Endothelial cell of umbilical vein (primary cell): ENCODE measurements at regions of chr9 and their contacts with region 1.

Region 1: GRCh38 chr9:121686930-121687541 is 35.6 kb downstream of the DAB2IP start:
- DNase-seq: peak; percentile 78
- H3K4me3 ChIP-seq: no peak overlapping the region
- H3K27ac ChIP-seq: no peak overlapping the region
- H3K4me1 ChIP-seq: no peaks in the 10 kb centered on the region
- H3K27me3 ChIP-seq: no peaks in the 10 kb centered on the region
- CTCF ChIP-seq: peak; percentile 90 to 91
- POLR2A ChIP-seq: no peak

Region 2: GRCh38 chr9:121621113-121621449 is 66.0 kb before region 1 on chr9:
- CTCF ChIA-PET with region 1: interaction called, 23 read pairs
- POLR2A ChIA-PET with region 1: no interaction called
- dilution Hi-C with region 1: no loop called
- intact Hi-C with region 1: no loop called
- DNase-seq: peak; percentile 35
- H3K4me3 ChIP-seq: no peak overlapping the region
- H3K27ac ChIP-seq: no peak overlapping the region
- H3K4me1 ChIP-seq: no peaks in the 10 kb centered on the region
- H3K27me3 ChIP-seq: no peaks in the 10 kb centered on the region
- CTCF ChIP-seq: peak; percentile 38 to 61
- POLR2A ChIP-seq: no peak

Region 3: DNA sequence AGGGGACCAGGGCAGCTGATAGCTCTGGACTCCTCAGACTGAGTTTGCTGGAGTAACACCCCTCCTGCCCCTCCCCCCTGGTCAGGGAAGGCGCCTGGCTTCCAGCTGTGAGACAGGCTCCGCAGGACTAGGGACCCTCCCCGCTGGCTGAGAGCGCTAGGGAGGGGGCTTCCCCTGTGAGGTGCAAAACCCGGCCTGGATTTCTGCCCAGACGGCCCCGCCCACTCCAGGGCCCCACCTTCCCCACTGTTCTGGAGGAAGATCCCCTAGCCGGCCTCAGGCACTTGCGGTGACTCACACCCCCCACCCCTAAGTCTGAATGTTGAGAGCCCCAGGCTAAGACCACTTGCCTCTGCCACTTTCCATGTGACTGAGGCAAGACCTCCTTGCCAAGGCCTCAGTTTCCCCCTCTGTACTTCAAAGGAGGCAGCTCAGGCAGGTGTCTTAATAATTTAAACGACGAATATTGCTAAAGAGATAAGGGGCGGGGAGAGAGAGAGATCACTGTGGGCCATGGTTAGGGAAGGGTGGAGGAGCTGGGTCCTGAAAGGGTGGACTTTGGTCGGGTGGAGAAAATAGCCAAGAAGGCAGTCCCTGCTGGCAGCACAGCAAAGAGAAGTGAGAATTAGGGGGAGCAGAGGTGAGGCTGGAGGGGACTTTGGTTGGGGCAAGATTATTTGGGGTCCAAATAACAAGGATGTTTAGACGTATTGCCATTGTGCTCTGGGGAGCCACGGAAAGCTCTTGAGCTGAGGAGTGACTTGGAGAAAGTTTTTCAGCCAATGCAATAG is 36.6 kb before region 1 on chr9:
- CTCF ChIA-PET with region 1: interaction called, 24 read pairs
- POLR2A ChIA-PET with region 1: no interaction called
- dilution Hi-C with region 1: no loop called
- intact Hi-C with region 1: no loop called
- DNase-seq: peak; percentile 65
- H3K4me3 ChIP-seq: no peak overlapping the region
- H3K27ac ChIP-seq: no peak overlapping the region
- H3K4me1 ChIP-seq: peaks cover 25% of the 10 kb centered on the region
- H3K27me3 ChIP-seq: no peaks in the 10 kb centered on the region
- CTCF ChIP-seq: no peak
- POLR2A ChIP-seq: no peak

Region 4: DNA sequence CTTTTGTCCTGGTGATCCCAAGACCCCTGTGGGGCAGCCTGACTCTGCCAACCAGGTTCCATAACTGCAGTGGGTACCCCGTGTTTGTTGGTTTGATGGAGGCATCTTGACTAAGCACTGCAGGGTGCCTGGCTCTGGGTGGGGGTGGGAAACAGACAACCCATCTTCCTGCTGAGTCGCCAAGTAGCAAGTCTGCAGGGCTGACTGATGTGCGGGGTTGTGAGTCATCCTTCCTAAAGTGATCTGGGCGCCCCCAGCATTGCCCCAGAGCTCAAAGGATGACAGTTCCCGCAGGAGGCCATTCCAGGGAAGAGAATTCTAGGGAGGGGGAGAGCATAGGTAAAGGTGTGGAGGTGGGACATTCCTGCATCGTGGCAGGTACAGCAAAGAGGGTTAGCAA is 12.1 kb before region 1 on chr9:
- CTCF ChIA-PET with region 1: interaction called, 19 read pairs
- POLR2A ChIA-PET with region 1: no interaction called
- dilution Hi-C with region 1: no loop called
- intact Hi-C with region 1: loop called (anchors 1 kb)
- DNase-seq: no peak
- H3K4me3 ChIP-seq: no peak overlapping the region
- H3K27ac ChIP-seq: no peak overlapping the region
- H3K4me1 ChIP-seq: no peaks in the 10 kb centered on the region
- H3K27me3 ChIP-seq: no peaks in the 10 kb centered on the region
- CTCF ChIP-seq: no peak
- POLR2A ChIP-seq: no peak

Region 5: DNA sequence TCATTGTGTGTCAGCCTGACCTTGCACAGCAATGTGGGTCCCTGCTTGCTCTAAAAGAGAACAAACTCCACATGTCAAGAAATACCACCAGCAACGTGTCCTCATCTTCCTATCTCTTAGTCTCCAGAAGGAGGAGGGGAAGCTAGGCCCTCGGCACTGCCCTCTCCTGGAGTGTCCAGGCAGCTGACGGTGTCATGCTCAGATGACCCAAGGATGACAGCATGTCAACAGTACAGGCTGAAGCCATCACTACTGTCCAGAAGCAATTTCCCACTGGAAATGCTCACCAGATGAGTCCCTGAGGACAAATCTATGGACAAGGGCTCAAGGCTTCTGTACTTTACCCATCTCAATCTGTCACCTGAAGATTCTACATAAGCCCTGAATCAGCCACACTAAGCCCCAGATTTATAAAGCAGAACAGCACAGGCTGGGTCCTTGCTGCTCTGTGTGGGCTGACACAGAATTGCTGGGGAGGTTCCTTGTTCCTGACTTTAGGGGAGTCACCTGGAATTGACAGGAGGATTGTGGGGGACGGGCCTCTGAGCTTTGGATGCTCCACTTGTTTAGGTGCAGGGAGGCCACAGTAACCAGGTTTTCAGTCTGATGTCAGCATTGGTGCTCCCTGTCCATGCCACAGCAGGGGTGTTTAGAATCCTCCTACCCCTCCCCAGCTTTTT is 174.6 kb after region 1 on chr9:
- CTCF ChIA-PET with region 1: interaction called, 10 read pairs
- POLR2A ChIA-PET with region 1: no interaction called
- dilution Hi-C with region 1: no loop called
- intact Hi-C with region 1: no loop called
- DNase-seq: peak; percentile 32
- H3K4me3 ChIP-seq: no peak overlapping the region
- H3K27ac ChIP-seq: no peak overlapping the region
- H3K4me1 ChIP-seq: peaks cover 6% of the 10 kb centered on the region
- H3K27me3 ChIP-seq: no peaks in the 10 kb centered on the region
- CTCF ChIP-seq: peak; percentile 46 to 53
- POLR2A ChIP-seq: no peak

Region 6: DNA sequence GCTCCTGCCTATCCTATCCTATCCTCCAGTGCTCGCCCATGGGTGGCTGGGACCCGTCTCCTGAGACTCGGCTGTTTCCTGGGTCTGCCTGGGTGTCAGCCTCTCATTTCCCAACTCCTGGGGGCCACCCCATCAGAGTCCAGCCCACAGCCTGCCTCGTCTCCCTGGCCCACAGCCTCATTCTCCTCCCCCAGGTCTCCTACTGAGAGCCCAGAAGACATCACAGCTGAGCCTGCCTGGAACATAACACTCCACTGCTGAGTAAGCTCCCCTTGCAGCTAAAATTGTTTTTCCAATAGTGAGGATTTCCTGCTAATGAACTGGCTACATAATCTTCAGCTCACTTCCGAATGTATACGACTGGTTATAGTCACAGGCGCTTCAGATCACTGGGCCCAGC is 310.8 kb after region 1 on chr9:
- CTCF ChIA-PET with region 1: interaction called, 20 read pairs
- POLR2A ChIA-PET with region 1: no interaction called
- dilution Hi-C with region 1: no loop called
- intact Hi-C with region 1: loop called (anchors 1 kb)
- DNase-seq: peak; percentile 73
- H3K4me3 ChIP-seq: no peak overlapping the region
- H3K27ac ChIP-seq: no peak overlapping the region
- H3K4me1 ChIP-seq: peaks cover 10% of the 10 kb centered on the region
- H3K27me3 ChIP-seq: no peaks in the 10 kb centered on the region
- CTCF ChIP-seq: no peak
- POLR2A ChIP-seq: no peak